Endothelial cell of umbilical vein (primary cell): ENCODE measurements at regions of chr6 and their contacts with region 1.

Region 1: GRCh38 chr6:122604676-122605075 is 5.5 kb upstream of the PKIB start:
- DNase-seq: no peak
- H3K4me3 ChIP-seq: no peak overlapping the region
- H3K27ac ChIP-seq: no peak overlapping the region
- H3K4me1 ChIP-seq: peaks cover 1% of the 10 kb centered on the region
- H3K27me3 ChIP-seq: peaks cover 0 to 6% of the 10 kb centered on the region in 2 experiments
- CTCF ChIP-seq: no peak
- POLR2A ChIP-seq: no peak

Region 2: GRCh38 chr6:123022975-123023374 is 418.3 kb after region 1 on chr6:
- CTCF ChIA-PET with region 1: no interaction called
- POLR2A ChIA-PET with region 1: interaction called, 10 read pairs
- dilution Hi-C with region 1: no loop called
- intact Hi-C with region 1: no loop called
- DNase-seq: no peak
- H3K4me3 ChIP-seq: no peak overlapping the region
- H3K27ac ChIP-seq: no peak overlapping the region
- H3K4me1 ChIP-seq: no peaks in the 10 kb centered on the region
- H3K27me3 ChIP-seq: no peaks in the 10 kb centered on the region
- CTCF ChIP-seq: no peak
- POLR2A ChIP-seq: no peak

Region 3: DNA sequence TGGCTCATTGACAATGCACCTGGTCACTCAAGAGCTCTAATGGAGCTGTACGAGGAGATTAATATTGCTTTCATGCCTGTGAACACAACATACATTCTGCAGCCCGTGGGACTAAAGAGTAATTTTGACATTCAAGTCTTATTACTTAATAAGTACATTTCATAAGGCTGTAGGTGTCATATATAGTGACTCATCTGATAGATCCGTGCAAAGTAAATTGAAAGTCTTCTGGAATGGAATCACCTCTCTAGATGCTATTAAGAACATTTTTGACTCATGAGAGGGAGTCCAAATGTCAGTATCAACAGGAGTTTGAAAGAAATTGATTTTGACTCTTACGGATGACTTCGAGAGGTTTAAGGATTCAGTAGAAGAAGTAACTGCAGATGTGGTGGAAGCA is 659.3 kb after region 1 on chr6:
- CTCF ChIA-PET with region 1: no interaction called
- POLR2A ChIA-PET with region 1: no interaction called
- dilution Hi-C with region 1: no loop called
- intact Hi-C with region 1: no loop called
- DNase-seq: no peak
- H3K4me3 ChIP-seq: no peak overlapping the region
- H3K27ac ChIP-seq: no peak overlapping the region
- H3K4me1 ChIP-seq: no peaks in the 10 kb centered on the region
- H3K27me3 ChIP-seq: no peaks in the 10 kb centered on the region
- CTCF ChIP-seq: no peak
- POLR2A ChIP-seq: no peak